Common myeloid progenitor, CD34-positive (primary cell): ENCODE measurements at regions of chr19 and their contacts with region 1.

Region 1: GRCh38 chr19:10478903-10479384 is 24.2 kb downstream of the KEAP1 start:
- DNase-seq: peak; percentile 93 to 98 (median 96)
- H3K4me3 ChIP-seq: peak overlapping the region in 3 of 7 experiments; percentile 30 to 58 (median 43)
- H3K27ac ChIP-seq: no peak overlapping the region
- H3K4me1 ChIP-seq: peaks cover 2 to 19% (median 12%) of the 10 kb centered on the region in 4 experiments
- H3K27me3 ChIP-seq: no peaks in the 10 kb centered on the region

Region 2: DNA sequence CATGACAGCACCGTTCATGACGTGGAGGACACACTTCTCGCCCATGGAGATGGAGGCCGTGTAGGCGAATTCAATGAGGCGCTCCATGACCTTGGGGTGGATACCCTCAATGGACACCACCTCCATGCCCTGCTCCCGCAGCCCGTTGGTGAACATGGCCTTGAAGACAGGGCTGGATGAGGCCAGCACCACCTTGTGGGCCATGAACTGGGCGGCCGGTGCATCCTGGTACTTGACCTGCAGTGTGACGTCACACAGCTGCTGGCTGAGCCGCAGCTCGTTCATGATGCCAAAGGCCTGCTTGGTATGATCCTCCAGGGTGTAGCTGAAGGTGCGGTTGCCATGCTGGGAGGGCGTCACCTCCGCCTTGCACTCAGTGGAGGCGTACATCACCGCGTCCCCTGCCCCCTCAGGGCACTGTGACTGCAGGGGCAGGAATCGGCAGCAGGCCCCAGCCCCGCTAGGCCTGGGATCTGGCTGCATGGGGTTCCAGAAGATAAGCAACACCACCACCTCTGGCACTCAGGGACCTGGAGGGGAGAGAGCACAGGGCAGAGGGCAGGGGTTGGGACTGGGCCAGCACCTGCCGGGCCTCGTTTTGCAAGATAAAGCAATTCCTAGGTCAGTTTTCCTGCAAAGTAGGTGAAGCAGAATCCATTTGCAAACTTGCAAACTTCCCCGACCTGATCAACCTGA is 20.8 kb after region 1 on chr19:
- CTCF ChIA-PET with region 1: interaction called, 11 read pairs
- POLR2A ChIA-PET with region 1: no interaction called
- DNase-seq: no peak
- H3K4me3 ChIP-seq: no peak overlapping the region
- H3K27ac ChIP-seq: no peak overlapping the region
- H3K4me1 ChIP-seq: peaks cover 0 to 18% (median 16%) of the 10 kb centered on the region in 4 experiments
- H3K27me3 ChIP-seq: no peaks in the 10 kb centered on the region

Region 3: DNA sequence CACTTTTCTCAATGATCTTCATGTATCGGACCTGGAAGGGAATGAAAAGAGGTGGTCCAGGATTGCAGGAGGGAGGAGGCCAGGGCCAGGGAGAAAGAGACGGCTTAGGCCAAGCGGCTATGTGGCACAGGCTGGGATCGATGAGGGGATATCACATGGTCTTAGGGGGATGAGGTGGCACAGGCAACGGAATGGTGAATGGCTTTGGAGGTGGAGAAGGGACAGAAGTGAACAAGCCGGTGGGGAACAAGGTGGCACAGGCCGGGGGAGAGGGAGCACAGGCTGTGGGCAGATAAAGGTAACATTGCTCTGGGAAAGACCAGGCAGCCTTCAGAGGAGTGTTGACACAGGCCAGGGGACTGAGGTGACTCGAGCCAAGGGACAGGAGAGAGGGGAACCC is 95.5 kb after region 1 on chr19:
- CTCF ChIA-PET with region 1: interaction called, 10 read pairs
- POLR2A ChIA-PET with region 1: no interaction called
- DNase-seq: no peak
- H3K4me3 ChIP-seq: no peak overlapping the region
- H3K27ac ChIP-seq: no peak overlapping the region
- H3K4me1 ChIP-seq: peaks cover 0 to 14% (median 11%) of the 10 kb centered on the region in 4 experiments
- H3K27me3 ChIP-seq: no peaks in the 10 kb centered on the region

Region 4: DNA sequence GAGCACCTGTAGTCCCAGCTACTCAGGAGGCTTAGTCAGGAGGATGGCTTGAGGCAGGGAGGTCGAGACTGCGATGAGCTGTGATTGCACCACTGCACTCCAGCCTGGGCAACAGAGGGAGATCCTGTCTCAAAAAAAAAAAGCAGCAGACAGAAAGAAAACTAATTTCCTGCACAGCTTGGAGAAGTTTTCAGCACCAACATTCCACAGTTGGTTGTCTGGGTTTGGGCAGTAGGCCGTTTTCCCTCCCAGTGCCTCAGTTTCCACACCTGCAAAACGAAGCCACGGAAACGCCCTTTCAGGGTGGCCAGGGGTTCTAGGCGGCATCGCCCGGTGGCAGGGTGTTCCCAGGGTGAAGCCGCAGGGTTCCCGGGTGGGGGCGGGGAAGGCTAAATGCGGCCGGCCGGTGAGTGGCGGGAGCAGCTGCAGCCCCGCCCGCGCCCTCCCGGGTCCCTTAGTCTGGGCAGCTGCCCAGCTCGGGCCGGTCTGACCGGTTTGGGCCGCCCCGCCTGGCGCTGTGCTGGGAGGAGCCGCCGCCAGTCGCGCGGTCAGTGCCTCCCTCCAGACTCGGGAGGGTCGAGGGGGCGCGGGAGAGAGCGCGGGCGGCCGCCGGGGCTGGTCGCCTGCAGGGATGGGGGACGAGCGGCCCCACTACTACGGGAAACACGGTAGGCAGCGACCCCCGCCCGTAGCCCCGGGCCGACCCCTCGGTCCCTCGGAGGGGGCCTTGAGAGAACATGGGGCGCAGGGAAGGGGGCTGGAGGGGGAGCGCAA is 146.2 kb after region 1 on chr19 and contains the start of gene SLC44A2:
- CTCF ChIA-PET with region 1: no interaction called
- POLR2A ChIA-PET with region 1: no interaction called
- DNase-seq: no peak
- H3K4me3 ChIP-seq: no peak within 1 kb of the TSS
- H3K27ac ChIP-seq: no peak within 1 kb of the TSS
- H3K4me1 ChIP-seq: no peaks in the 10 kb centered on the region
- H3K27me3 ChIP-seq: no peaks in the 10 kb centered on the region